AG04449 (cell line): ENCODE measurements at regions of chr5 and their contacts with region 1.

Region 1: DNA sequence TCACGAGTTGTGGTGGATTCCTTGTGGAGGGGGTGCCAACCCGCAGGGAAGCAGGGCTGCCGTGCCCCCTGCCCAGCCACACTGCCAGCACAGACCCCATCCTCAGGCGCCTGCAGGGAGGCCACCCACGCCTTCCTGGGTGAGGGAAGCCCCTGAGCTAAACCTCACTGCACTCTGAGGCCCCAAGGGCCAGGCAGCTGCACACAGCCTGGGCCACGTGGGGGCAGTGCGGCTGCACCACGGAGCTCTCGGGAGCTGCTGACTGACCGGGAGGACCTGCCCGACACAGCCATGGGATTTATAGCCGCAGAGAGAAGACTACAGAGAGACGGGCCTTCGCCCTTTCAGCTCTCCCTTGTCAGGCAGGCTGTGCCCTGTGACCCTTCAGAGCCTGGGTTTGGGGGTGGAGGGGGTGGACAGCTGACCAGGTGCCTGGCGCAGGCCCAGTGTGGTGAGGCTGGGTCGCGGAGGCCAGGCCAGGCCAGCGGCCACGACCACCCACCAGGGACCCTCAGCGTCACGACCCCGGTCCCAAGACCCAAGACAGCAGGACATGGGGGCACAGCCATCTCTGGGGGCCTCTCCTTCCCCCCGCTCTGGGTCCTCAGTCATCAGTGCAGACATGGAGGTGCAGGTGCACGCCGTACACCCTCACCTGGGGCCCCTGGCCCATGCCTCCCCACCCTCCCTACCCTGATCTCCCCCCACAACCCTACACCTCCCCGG is 4.3 kb upstream of the AHRR start:
- DNase-seq: no peak
- H3K4me3 ChIP-seq: no peak overlapping the region
- CTCF ChIP-seq: peak; percentile 98

Region 2: GRCh38 chr5:188488-189481 is 128.5 kb before region 1 on chr5:
- CTCF ChIA-PET with region 1: interaction called, 10 read pairs
- POLR2A ChIA-PET with region 1: no interaction called
- DNase-seq: peak; percentile 5
- H3K4me3 ChIP-seq: peak overlapping the region; percentile 23; the same call in 1 of the 2 replicates
- CTCF ChIP-seq: peak; percentile 98

Region 3: DNA sequence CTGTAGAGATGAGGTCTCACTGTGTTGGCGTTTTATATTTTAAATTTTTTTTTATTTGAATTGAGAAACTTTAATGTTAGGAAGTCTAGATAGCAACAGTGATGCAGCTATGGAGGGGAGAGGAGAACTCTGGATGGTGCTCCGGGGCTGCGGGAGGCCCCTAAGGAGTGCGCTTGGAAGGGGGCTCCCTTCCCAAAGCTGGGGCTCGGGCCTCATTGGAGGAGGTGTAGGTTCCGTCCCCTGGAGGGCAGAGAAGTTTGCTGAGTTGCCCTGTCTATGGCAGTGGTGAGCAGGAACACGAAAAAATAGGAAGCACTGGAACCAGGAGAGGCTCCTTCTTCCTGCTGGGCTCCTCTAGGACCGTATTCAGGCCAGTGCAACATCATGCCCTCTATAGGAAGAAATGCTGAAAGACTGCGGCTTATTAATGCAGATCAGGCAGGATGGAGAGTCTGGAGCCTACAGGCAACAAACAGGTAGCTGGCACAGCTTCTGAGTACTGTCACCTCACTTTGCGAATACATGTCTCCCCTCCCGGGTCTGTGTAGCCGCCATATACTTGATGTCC is 20.4 kb after region 1 on chr5:
- CTCF ChIA-PET with region 1: interaction called, 19 read pairs
- POLR2A ChIA-PET with region 1: no interaction called
- DNase-seq: no peak
- H3K4me3 ChIP-seq: no peak overlapping the region
- CTCF ChIP-seq: peak; percentile 59

Region 4: DNA sequence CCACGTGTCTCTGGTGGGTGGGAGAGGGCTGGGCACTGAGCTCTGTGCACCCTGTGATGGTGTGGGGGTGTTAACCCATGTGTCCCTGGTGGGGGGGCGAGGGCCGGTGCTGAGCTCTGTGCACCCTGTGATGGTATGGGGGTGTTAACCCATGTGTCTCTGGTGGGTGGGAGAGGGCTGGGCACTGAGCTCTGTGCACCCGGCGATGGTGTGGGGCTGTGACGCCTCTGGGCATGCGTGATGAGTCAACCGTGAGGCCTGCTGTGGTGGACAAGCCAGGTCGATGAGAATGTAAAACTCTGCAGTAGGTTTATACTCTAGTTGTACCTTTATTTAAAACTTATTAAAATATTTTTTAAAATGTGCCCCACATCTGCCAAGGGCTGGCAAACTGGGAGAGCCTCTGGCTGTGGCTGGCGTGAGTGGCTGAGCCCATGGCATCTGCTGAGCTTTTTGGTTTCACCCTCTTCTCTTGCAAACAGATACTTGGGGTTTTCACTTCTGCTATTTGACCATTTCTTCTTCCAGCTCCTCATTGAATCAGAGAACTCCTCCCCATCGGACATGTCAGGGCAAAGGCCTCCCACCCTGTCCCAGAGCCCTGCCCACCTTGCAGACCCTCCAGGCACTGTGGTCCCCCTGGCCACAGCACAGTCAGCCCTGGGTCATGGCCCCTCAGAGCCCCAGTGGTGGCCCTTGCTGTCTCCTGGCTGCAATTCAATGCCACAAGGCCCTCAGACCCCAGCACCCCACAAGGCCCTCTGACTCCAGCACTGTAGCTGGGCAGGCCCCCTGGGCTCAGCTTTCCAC is 107.3 kb after region 1 on chr5:
- CTCF ChIA-PET with region 1: interaction called, 97 read pairs
- POLR2A ChIA-PET with region 1: no interaction called
- DNase-seq: no peak
- H3K4me3 ChIP-seq: no peak overlapping the region
- CTCF ChIP-seq: no peak

Region 5: GRCh38 chr5:431001-431710 is 113.9 kb after region 1 on chr5:
- CTCF ChIA-PET with region 1: interaction called, 97 read pairs
- POLR2A ChIA-PET with region 1: no interaction called
- DNase-seq: no peak
- H3K4me3 ChIP-seq: no peak overlapping the region
- CTCF ChIP-seq: peak; percentile 91

Region 6: DNA sequence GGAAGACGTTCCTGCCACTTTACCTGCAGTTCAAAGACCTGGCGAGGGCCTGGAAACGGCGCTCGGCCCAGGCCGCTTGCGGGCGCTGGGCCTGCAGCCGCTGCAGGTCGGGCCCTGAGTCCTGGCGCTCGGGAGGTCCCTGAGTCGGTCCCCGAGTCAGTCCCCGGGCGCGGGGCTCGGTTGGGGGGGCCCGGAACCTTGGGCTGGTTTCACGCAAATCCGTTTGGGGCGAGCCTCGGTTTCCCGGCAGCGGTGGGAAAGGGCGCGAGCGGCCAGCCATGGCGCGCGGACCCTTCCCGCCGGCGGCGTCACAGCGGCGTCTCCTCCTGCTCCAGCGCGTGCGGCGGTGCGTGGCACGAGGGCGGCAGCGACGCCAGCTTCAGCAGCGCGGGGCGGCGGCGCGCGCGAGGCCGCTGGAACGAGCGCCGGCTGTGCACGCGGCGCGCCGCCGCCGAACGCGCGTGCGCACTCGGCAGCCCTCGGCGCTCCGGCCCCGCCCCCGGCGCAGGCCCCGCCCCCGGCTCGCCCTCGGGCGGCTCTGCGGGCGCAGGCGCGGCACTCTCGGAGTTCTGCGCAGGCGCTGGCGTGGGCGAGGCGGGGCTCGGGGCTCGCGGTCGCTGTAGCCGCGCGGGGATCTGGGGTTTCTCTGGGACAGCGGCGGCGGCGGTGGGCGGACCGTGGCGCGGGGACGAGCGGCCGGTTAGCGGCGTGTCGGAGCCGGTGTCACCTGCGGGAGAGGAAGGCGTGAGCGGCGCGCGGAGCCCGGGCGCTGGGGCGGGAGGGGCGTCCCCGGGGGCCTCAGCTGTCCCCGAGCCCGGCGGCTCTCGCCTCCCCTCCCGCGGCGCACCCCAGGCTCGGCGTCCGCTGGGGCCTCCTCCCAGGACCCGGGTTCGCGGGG is 155.7 kb after region 1 on chr5:
- CTCF ChIA-PET with region 1: interaction called, 17 read pairs
- POLR2A ChIA-PET with region 1: interaction called, 3 read pairs
- DNase-seq: no peak
- H3K4me3 ChIP-seq: peak overlapping the region; percentile 71
- CTCF ChIP-seq: no peak